Common myeloid progenitor, CD34-positive (primary cell): ENCODE measurements at regions of chr5 and their contacts with region 1.

Region 1: DNA sequence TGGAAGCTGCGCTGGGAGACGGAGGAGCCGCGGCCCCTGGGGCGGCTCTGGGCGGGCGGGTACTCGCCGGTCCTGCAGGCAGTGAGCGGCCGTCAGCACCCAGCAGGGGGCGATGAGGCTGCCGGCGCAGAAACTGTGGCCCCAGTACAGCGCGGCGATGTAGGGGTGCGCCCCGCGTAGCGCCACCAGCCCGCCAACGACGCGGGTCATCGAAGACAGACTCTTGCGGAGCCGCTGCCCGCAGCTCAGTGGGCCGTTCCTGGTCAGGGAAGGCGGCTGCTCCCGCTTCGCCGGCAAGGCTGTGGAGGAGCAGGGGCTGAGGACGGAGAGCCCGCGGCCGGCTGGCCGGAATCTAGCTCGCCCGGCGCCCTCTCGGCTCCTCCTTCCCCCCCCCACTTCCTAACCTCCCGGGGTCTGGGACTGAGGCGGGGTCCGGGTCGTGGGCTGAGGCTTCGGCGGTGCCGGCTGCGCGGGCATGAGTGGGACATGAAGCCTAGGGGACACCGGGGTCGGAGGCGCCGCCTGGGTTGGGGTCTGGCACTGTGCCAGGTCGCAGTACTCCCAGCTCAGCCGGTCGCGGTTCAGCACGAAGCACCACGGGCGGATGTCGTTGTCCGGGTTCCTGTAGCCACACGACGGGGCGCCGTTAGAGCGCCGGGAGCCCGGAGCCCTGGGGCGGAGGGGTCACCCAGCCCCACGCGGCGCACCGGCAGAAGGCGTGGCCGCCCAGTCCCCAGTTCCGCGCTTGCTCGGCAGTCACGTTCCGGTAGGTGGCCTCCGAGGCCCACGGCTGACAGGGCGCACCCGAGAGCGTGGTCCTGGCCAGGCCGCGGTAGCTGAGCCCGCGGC is 3.6 kb upstream of the PFN3 start:
- DNase-seq: peak; percentile 88 to 93 (median 92)
- H3K4me3 ChIP-seq: peak overlapping the region; percentile 29 to 76 (median 61)
- H3K27ac ChIP-seq: peak overlapping the region in 1 of 2 experiments; percentile 49
- H3K4me1 ChIP-seq: peaks cover 2 to 55% (median 44%) of the 10 kb centered on the region in 4 experiments
- H3K27me3 ChIP-seq: peaks cover 0 to 40% (median 16%) of the 10 kb centered on the region in 5 experiments

Region 2: DNA sequence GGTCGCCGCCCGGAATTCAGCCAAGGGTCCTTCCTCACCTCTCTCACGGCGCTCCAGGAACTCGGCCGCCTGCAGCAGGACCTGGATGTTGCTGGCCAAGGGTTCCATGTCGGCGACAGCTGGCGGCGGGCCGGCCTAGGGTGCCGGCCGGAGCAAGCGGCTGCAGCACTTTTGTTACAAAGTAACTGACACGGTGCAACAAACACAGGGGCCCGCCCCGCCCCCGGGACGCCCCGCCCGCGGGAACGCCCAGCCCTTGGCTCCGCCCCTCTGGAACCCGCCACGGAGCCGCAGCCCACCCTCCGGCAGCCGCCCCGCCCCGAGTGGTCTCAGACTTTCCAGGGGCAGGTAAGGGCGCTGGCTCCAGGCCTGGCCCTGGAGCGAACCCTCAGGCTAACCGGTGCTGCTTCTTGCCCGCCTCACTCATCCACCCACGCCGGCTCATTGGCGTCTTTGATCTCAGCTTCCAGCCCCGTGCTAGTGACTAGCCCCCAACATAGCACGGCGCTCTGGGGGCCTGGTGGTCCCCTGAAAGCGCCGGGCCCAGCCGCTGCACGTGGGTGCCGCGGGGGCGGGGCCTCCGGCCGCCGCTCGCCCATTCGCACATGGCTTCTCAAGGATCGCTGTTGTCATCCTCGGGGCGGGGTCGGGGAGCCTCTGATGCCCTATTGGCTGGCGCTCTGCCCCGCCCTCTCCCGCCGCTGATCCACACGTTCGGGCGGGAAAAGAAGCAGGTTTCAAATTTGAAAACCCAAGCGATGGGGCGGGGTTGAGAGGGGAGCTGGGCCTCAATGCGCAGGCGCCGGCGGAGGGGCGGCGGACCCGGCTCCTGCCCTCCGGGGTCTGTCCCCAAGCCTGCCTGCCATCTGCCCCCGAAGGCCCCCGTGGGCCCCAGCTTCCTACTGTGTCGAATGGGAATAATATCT is 92.0 kb before region 1 on chr5 and contains the start of gene MXD3:
- CTCF ChIA-PET with region 1: interaction called, 23 read pairs
- POLR2A ChIA-PET with region 1: no interaction called
- DNase-seq: peak; percentile 94 to 97 (median 96)
- H3K4me3 ChIP-seq: peak within 1 kb of the TSS; percentile 41 to 89 (median 70)
- H3K27ac ChIP-seq: peak within 1 kb of the TSS in 1 of 2 experiments; percentile 58
- H3K4me1 ChIP-seq: peaks cover 4 to 63% (median 59%) of the 10 kb centered on the region in 4 experiments
- H3K27me3 ChIP-seq: no peaks in the 10 kb centered on the region

Region 3: DNA sequence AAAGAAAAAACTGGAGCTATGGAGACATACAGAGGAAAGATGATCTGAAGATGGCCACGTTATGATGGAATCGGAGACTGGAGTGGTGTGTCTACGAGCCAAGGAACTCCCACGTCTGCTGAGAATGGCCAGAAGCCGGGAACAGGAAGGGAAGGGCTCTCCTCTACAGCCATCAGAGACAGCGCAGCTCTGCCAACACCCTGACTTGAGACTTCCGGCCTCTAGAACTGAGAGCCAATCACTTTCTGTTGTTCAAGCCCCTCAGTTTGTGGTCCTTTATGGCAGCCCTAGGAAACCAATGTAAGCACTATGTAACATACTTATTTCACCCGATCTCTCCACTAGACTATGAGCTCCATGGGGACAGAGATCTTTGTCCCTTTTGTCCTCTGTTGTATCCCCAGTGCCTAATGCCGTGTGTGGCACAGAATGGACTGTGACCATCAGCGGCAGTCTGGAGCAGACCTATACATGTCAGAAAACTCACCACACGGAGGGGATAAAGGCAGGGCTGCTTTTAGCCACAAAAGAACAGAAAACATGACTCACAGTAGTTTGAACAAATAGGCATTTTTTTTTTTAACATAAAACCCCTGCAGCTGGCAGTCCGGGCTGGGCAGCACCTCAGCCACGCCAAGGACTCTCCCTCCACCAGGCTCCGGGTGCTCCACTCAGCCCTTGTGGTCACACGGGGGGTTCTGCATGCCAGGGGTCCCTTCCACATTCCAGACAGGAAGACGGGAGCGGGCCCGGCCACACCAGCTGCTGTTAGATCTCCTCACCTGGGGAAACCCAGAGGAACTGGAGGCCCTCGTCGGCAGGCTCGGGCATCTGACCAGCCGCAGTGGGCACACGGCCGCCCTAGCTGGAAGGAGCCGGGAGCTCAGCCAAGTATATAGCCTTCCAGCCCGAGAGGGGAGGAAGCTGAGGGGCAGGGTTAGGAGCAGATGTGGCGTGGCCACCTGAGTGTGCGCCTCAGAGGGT is 76.2 kb before region 1 on chr5:
- CTCF ChIA-PET with region 1: interaction called, 10 read pairs
- POLR2A ChIA-PET with region 1: no interaction called
- DNase-seq: peak in 2 of 3 donors; percentile 60 to 66
- H3K4me3 ChIP-seq: peak overlapping the region in 1 of 7 experiments; percentile 34
- H3K27ac ChIP-seq: no peak overlapping the region
- H3K4me1 ChIP-seq: peaks cover 3 to 52% (median 32%) of the 10 kb centered on the region in 4 experiments
- H3K27me3 ChIP-seq: no peaks in the 10 kb centered on the region

Region 4: DNA sequence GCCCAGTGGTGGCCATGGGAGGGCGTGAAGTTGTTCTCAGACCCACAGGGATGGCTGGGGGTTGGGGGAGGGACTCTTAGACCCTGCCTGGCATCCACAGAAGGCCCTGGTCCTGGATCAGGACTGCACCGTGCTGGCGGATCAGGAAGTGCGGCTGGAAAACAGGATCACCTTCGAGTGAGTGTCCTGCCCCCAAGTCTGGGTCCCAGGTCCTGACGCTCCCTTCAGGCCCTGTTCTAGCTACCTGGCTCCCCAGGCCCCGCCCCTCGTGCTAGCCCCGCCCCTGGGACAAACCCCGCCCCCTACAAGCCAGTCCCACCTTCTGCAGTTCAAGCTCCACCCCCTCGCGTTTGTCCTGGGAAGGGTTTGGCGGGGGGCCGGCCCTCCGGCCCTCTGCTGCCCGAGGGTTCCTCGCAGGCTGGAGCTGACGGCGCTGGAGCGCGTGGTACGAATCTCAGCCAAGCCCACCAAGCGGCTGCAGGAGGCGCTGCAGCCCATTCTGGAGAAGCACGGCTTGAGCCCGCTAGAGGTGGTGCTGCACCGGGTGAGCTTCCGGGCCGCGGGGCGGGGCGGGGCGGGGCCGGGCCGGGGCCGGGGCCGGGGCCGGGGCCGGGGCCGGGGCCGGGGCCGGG is 33.4 kb before region 1 on chr5:
- CTCF ChIA-PET with region 1: interaction called, 63 read pairs
- POLR2A ChIA-PET with region 1: no interaction called
- DNase-seq: peak; percentile 83 to 85 (median 85)
- H3K4me3 ChIP-seq: peak overlapping the region in 1 of 7 experiments; percentile 72
- H3K27ac ChIP-seq: no peak overlapping the region
- H3K4me1 ChIP-seq: peaks cover 0 to 48% (median 41%) of the 10 kb centered on the region in 4 experiments
- H3K27me3 ChIP-seq: no peaks in the 10 kb centered on the region

Region 5: DNA sequence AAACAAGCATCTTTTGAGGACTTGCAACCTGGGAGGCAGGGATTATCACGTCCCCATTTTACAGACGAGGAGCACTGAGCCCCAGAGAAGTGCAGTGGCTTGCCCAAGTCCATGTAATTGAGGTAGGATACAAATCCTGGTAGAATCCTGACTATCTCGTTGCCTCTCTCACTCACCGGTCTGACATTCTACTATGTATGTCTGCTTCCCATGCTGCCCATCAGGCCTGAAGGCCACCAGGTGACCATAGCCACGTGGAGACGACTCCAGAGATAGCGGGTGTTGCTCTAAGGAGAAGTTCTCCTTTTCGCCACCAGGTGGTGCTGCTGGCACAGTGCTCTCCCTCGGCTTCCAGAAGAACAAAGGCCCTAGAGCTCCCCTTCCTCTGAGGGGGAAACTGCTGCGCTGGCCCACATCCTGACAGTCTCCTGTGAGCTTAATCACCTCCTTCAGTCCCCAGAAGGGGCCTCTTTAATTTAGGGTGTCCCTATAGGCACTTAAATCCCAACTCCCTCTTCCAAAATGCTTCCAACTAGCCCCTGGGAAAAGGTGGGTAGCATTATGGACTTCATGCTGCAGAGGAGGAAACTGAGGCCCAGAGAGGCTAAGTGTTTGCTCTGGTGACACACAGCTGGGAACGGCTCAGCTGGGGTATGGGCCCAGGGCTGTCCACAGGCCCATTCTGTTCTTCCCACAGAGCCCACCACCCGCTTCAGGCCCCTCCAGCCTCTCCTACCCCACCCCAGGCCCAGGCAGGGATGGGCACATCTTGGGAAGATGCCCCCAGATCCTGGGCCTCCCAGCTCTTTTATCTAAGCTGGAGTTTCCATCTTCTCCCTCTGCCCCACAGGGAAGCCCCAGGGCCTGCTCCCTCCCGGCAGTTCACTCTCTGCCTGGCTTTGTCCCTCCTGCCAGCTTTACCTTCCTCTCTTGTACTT is 13.4 kb before region 1 on chr5:
- CTCF ChIA-PET with region 1: interaction called, 226 read pairs
- POLR2A ChIA-PET with region 1: interaction called, 9 read pairs
- DNase-seq: peak; percentile 88 to 96 (median 94)
- H3K4me3 ChIP-seq: no peak overlapping the region
- H3K27ac ChIP-seq: no peak overlapping the region
- H3K4me1 ChIP-seq: peaks cover 3 to 58% (median 37%) of the 10 kb centered on the region in 4 experiments
- H3K27me3 ChIP-seq: no peaks in the 10 kb centered on the region

Region 6: GRCh38 chr5:177446200-177447065 is 42.4 kb after region 1 on chr5 and contains the start of gene PRR7:
- CTCF ChIA-PET with region 1: interaction called, 509 read pairs
- POLR2A ChIA-PET with region 1: interaction called, 34 read pairs
- DNase-seq: peak; percentile 47 to 84 (median 76)
- H3K4me3 ChIP-seq: peak within 1 kb of the TSS; percentile 16 to 79 (median 55)
- H3K27ac ChIP-seq: no peak within 1 kb of the TSS
- H3K4me1 ChIP-seq: peaks cover 0 to 41% (median 25%) of the 10 kb centered on the region in 4 experiments
- H3K27me3 ChIP-seq: no peaks in the 10 kb centered on the region

Region 7: DNA sequence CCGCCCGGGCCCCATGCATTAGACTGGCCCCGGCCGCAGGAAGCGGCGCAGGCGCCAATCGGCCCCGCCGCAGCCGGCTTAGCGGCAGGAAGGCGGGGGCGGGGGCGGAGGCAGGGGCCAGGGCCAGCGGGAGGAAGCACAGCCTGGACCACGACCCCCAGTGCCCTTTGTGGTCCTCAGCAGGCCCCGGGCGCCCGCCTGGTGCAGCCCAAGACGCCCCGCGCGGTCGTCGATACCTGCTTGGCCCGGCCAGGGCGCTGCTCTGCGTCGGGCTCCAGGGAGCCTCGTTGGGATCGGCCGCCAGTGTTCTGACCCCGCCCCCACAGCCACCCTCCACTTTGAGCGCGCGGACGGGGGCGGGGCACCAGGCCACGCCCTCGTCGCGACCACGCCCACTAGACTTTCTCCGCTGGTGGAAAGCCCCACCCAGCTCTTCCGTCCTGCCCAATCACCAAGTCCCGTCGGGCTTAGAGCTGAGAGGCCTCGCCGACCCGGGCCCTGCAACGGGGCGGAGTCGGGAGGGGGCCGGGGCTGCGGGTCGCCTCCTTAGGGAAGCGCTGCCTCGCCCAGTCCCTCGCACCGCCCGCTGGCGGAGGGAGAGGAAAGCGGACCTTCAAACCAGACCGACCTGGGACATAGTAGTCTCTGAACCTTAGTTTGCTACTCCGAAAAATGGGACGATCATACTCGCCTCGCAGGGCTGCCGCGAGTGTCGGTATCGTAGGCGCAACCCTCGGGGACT is 93.4 kb after region 1 on chr5 and contains the start of gene PDLIM7:
- CTCF ChIA-PET with region 1: interaction called, 109 read pairs
- POLR2A ChIA-PET with region 1: no interaction called
- DNase-seq: peak; percentile 92 to 96 (median 95)
- H3K4me3 ChIP-seq: peak within 1 kb of the TSS; percentile 39 to 78 (median 69)
- H3K27ac ChIP-seq: peak within 1 kb of the TSS in 1 of 2 experiments; percentile 66
- H3K4me1 ChIP-seq: peaks cover 2 to 63% (median 50%) of the 10 kb centered on the region in 4 experiments
- H3K27me3 ChIP-seq: peaks cover 0 to 5% (median 0%) of the 10 kb centered on the region in 5 experiments